Activated CD8-positive, alpha-beta T cell treated with anti-CD3 and anti-CD28 coated beads, Interleukin-2, amount 10 ng/mL, durations not matched to agents 7 days and 5 days (primary cell): ENCODE measurements at regions of chr1 and their contacts with region 1.

Region 1: DNA sequence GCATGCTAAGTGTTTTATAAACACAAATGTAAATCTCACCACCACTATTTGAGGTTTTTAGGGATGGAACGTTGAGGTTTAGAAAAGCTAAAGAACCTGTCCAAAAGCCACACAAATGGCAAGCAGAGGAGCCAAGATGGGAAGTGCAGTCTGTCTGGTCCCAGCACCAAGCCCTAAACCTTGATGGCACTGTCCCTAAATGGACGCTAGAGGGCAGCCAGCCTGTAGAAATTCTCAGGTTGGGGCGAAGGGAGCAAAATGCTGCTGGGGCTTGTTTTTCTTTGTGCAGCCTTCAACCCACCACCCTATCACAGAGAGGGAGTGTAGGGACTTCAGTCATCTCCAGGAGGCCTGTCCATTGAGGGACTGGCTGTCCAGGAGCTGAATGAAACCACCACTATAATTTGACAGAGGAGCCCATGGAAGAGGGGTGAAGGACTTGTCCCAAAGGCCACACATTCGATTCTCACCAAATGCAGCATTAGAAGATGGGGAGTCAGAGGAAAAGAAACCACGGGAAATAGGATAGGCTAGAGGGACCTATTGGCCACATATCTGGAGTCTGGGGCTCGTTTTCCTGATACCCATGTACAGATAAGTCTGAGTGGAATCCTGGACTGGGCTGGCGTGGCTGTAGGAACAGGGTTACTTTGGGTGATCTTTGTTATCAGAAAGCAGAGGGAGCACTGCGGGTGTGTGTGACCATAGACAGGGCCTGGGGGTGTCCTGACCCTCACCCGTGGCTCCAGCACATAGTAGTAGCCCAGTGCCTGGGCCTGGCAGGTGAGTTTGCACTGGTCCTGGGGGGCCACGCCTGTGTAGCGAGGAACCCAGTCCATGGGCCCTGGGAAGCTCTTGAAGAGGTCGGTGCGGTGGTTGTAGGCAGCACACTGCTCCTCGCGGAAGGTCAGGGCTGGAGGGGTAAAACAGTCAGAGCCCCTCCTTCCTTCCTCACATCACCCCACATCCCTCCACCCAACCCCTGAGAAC is 6.1 kb downstream of the ADAMTS4 start:
- DNase-seq: peak; percentile 82
- ATAC-seq: peak; percentile 93
- H3K4me3 Mint-ChIP-seq: no peak overlapping the region
- H3K27ac Mint-ChIP-seq: peak overlapping the region; percentile 82
- H3K4me1 Mint-ChIP-seq: peaks cover 57% of the 10 kb centered on the region
- H3K27me3 Mint-ChIP-seq: no peaks in the 10 kb centered on the region

Region 2: DNA sequence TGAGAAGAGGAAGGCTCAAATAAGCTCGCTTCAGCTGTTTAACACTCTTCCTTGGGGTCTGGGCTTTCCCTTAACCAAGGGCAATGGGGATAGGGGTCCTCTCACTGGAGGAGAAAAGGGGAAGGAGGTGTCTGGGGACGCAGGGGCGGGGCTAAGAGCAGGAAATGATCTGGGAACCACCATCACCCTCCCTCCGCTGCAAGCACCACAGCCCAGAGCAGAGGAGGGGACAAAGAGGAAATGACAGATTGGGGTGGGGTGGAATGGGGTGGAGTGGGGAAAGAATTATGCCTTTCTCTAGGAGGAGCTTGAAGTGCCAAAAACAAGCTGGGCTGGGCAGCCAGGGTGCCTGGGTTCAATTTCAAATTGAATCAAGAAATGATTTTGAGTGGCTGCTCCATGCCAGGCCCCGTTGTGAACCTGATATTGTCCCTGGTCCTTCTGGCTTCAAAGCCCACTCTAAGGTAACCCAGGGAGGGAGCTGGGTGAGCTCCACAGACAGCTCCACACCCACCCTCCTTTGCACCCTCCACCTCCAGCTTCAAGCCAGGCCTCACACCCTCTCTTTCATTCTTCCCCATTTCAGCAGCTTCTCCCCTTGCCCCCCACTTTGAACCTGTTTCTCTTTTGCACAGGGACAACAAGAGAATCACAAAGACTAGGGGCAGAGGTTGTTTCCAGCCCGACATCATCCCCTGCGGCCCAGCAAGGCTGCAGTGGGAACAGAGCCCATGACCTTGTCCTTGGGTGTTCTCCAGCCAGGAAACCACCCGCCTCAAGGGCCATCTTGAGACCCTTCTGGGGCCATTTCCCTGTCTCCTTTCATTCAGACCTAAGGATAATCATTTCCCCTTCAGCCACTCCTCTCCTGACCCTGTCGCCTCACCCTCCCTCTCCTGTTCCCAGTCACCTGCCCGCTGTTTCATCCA is 124.2 kb before region 1 on chr1:
- CTCF ChIA-PET with region 1: no interaction called
- POLR2A ChIA-PET with region 1: no interaction called
- DNase-seq: peak; percentile 92
- ATAC-seq: peak; percentile 73
- H3K4me3 Mint-ChIP-seq: peak overlapping the region; percentile 92
- H3K27ac Mint-ChIP-seq: peak overlapping the region; percentile 99
- H3K4me1 Mint-ChIP-seq: peaks cover 73% of the 10 kb centered on the region
- H3K27me3 Mint-ChIP-seq: no peaks in the 10 kb centered on the region

Region 3: GRCh38 chr1:161177112-161177935 is 15.4 kb before region 1 on chr1 and contains the start of gene B4GALT3:
- CTCF ChIA-PET with region 1: interaction called, 70 read pairs
- POLR2A ChIA-PET with region 1: interaction called, 16 read pairs
- DNase-seq: peak; percentile 94
- ATAC-seq: peak; percentile 91
- H3K4me3 Mint-ChIP-seq: peak within 1 kb of the TSS; percentile 90
- H3K27ac Mint-ChIP-seq: peak within 1 kb of the TSS; percentile 94
- H3K4me1 Mint-ChIP-seq: peaks cover 56% of the 10 kb centered on the region
- H3K27me3 Mint-ChIP-seq: no peaks in the 10 kb centered on the region
- total RNA-seq, gene B4GALT3: 34.2 to 37.0 TPM

Region 4: GRCh38 chr1:161209790-161210409 is 17.1 kb after region 1 on chr1:
- CTCF ChIA-PET with region 1: interaction called, 331 read pairs
- POLR2A ChIA-PET with region 1: no interaction called
- DNase-seq: peak; percentile 84
- ATAC-seq: peak; percentile 89
- H3K4me3 Mint-ChIP-seq: no peak overlapping the region
- H3K27ac Mint-ChIP-seq: peak overlapping the region; percentile 57
- H3K4me1 Mint-ChIP-seq: peaks cover 48% of the 10 kb centered on the region
- H3K27me3 Mint-ChIP-seq: no peaks in the 10 kb centered on the region

Region 5: DNA sequence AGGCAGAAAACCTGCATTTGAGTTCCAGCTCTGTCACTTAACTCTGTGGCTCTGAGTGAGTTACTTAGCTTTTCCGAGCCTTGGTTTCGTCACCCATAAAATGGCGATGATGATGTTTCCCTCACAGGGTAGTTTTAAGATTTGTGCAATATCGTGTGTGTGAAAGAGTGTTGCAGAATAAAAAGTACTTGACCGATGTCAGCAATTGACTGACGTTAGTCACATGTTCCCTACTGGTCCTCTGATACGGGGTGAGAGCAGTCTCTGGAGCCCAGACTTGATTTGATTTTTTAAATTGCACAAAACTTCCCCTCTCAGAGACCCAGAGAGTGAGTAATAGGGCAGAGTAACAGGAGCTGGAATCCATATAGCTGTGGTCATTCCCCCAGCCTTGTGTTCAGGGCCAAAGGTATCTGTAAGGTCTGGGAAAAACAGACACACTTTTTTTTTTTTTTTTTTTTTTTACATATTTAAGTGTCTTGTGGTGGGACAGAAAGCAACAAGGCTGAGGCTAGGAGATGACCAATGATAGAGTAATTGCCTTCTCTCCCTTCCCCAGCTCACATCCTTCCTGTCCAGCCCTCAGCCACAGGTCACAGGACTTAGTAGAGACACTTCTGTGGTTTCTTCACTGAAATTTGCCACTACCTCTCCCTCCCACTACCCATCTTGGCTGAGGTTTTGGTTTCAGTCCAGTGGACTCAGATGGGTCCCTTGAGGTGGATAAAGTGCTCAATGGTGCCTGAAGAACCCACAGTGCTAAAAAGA is 24.4 kb after region 1 on chr1:
- CTCF ChIA-PET with region 1: interaction called, 331 read pairs
- POLR2A ChIA-PET with region 1: no interaction called
- DNase-seq: no peak
- ATAC-seq: peak; percentile 33
- H3K4me3 Mint-ChIP-seq: peak overlapping the region; percentile 55
- H3K27ac Mint-ChIP-seq: peak overlapping the region; percentile 77
- H3K4me1 Mint-ChIP-seq: peaks cover 52% of the 10 kb centered on the region
- H3K27me3 Mint-ChIP-seq: no peaks in the 10 kb centered on the region

Region 6: GRCh38 chr1:161242313-161242712 is 49.5 kb after region 1 on chr1:
- CTCF ChIA-PET with region 1: no interaction called
- POLR2A ChIA-PET with region 1: no interaction called
- DNase-seq: no peak
- ATAC-seq: no peak
- H3K4me3 Mint-ChIP-seq: no peak overlapping the region
- H3K27ac Mint-ChIP-seq: no peak overlapping the region
- H3K4me1 Mint-ChIP-seq: no peaks in the 10 kb centered on the region
- H3K27me3 Mint-ChIP-seq: peaks cover 12% of the 10 kb centered on the region

Region 7: DNA sequence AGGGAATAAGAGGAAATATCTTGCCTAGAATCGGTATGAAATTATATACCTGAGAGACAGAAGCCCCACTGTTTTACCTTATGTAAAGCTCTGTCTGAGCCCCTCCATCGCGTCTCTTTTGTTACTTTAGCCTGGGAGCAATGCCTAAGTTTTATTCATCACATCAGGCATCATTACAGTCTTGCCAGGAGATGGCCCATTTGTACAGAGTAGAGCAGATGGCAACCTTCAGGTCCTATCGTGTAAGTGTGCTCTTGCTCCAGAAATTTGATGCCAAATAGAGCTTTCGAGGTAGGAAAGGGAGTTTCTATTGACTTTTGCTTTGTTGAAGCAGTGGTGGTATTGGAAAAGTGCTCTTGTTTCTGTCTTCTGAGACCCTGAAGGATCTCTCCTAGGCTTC is 150.1 kb after region 1 on chr1:
- CTCF ChIA-PET with region 1: no interaction called
- POLR2A ChIA-PET with region 1: no interaction called
- DNase-seq: no peak
- ATAC-seq: no peak
- H3K4me3 Mint-ChIP-seq: no peak overlapping the region
- H3K27ac Mint-ChIP-seq: no peak overlapping the region
- H3K4me1 Mint-ChIP-seq: no peaks in the 10 kb centered on the region
- H3K27me3 Mint-ChIP-seq: no peaks in the 10 kb centered on the region

Region 8: DNA sequence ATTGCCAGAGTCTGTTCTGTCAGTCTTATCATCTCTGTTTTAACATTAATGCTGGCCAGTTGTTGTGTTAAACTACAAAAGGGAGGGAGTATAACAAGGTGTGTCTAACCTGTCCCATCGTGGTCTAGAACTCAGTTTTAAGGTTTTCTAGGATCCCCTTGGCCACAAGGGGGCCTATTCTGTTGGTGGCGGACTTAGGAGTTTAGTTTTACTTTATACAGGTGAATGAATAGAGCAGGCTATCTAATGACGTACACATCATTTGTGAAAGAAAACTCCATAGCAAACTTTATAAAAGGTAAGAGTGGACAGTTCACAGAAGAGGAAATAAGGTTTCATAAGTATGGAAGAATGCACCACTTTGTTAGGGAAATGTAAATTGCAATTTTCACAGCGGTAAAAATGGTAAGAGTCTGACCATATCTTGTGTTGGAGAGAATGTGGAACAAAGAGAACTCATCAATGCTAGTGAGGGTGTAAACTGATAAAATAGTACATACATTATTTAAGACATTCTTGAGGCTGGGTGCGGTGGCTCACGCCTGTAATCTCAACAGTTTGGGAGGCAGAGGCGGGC is 570.8 kb after region 1 on chr1:
- CTCF ChIA-PET with region 1: no interaction called
- POLR2A ChIA-PET with region 1: no interaction called
- DNase-seq: peak; percentile 68
- ATAC-seq: peak; percentile 68
- H3K4me3 Mint-ChIP-seq: peak overlapping the region; percentile 40
- H3K27ac Mint-ChIP-seq: no peak overlapping the region
- H3K4me1 Mint-ChIP-seq: peaks cover 37% of the 10 kb centered on the region
- H3K27me3 Mint-ChIP-seq: no peaks in the 10 kb centered on the region